ENCODE measurements at regions of chr1 and their contacts with region 1.

Region 1: GRCh38 chr1:201114236-201115131 is 2.3 kb upstream of the CACNA1S start:
- DNase-seq: peak; percentile 89
- H3K4me3 Mint-ChIP-seq: peak overlapping the region; percentile 81
- H3K27ac Mint-ChIP-seq: no peak overlapping the region
- H3K4me1 Mint-ChIP-seq: peaks cover 2% of the 10 kb centered on the region
- H3K27me3 Mint-ChIP-seq: peaks cover 2% of the 10 kb centered on the region

Region 2: GRCh38 chr1:200802865-200803512 is 311.5 kb before region 1 on chr1:
- CTCF ChIA-PET with region 1: no interaction called
- intact Hi-C with region 1: loop called (anchors 10 kb)
- DNase-seq: peak; percentile 90
- H3K4me3 Mint-ChIP-seq: no peak overlapping the region
- H3K27ac Mint-ChIP-seq: no peak overlapping the region
- H3K4me1 Mint-ChIP-seq: peaks cover 4% of the 10 kb centered on the region
- H3K27me3 Mint-ChIP-seq: no peaks in the 10 kb centered on the region

Region 3: GRCh38 chr1:200979574-200980451 is 134.7 kb before region 1 on chr1:
- CTCF ChIA-PET with region 1: interaction called, 32 read pairs
- intact Hi-C with region 1: loop called (anchors 1 kb)
- DNase-seq: peak; percentile 83
- H3K4me3 Mint-ChIP-seq: no peak overlapping the region
- H3K27ac Mint-ChIP-seq: no peak overlapping the region
- H3K4me1 Mint-ChIP-seq: no peaks in the 10 kb centered on the region
- H3K27me3 Mint-ChIP-seq: no peaks in the 10 kb centered on the region

Region 4: GRCh38 chr1:200992382-200993048 is 122.0 kb before region 1 on chr1:
- CTCF ChIA-PET with region 1: no interaction called
- intact Hi-C with region 1: no loop called
- DNase-seq: no peak
- H3K4me3 Mint-ChIP-seq: no peak overlapping the region
- H3K27ac Mint-ChIP-seq: no peak overlapping the region
- H3K4me1 Mint-ChIP-seq: no peaks in the 10 kb centered on the region
- H3K27me3 Mint-ChIP-seq: no peaks in the 10 kb centered on the region

Region 5: DNA sequence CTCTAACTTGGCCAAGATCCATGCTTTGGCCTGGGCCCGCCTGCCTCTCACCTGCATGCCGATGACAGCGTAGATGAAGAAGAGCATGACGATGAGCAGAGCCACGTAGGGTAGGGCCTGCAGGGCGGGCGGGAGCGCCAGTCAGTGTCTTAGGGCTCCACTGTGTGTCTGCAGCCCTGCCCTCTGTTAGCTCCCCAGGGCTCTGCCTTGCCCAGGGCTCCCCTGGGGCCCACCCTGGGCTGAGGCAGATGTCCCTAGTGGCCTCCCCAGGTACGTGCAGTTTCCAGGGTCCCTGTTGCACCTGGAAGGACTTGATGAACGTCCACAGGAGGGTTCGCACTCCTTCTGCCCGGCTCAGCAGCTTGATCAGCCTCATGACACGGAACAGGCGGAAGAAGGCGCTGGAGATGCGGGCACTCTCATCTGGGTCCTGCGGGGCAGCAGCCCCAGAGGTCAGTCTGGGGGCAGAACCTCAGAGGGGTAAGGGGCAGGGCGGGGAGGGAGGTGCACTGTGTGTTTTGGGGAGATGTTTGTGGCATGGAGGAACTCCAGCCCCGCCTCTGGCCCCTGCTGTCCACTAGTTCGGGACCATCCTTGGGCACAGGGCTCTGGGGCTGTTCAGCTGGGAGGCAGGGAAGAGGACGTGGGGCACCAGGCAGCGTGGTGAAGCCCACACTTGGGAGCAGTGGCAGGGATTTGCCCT is 61.2 kb before region 1 on chr1:
- CTCF ChIA-PET with region 1: no interaction called
- intact Hi-C with region 1: loop called (anchors 1 kb)
- DNase-seq: no peak
- H3K4me3 Mint-ChIP-seq: no peak overlapping the region
- H3K27ac Mint-ChIP-seq: no peak overlapping the region
- H3K4me1 Mint-ChIP-seq: peaks cover 13% of the 10 kb centered on the region
- H3K27me3 Mint-ChIP-seq: no peaks in the 10 kb centered on the region

Region 6: GRCh38 chr1:201064806-201065205 is 49.7 kb before region 1 on chr1:
- CTCF ChIA-PET with region 1: no interaction called
- intact Hi-C with region 1: no loop called
- DNase-seq: no peak
- H3K4me3 Mint-ChIP-seq: no peak overlapping the region
- H3K27ac Mint-ChIP-seq: no peak overlapping the region
- H3K4me1 Mint-ChIP-seq: no peaks in the 10 kb centered on the region
- H3K27me3 Mint-ChIP-seq: no peaks in the 10 kb centered on the region

Region 7: GRCh38 chr1:201085916-201086735 is 28.4 kb before region 1 on chr1:
- CTCF ChIA-PET with region 1: interaction called, 16 read pairs
- intact Hi-C with region 1: loop called (anchors 1 kb)
- DNase-seq: peak; percentile 66
- H3K4me3 Mint-ChIP-seq: no peak overlapping the region
- H3K27ac Mint-ChIP-seq: no peak overlapping the region
- H3K4me1 Mint-ChIP-seq: no peaks in the 10 kb centered on the region
- H3K27me3 Mint-ChIP-seq: peaks cover 2% of the 10 kb centered on the region

Region 8: GRCh38 chr1:201348211-201348566 is 233.7 kb after region 1 on chr1:
- CTCF ChIA-PET with region 1: no interaction called
- intact Hi-C with region 1: no loop called
- DNase-seq: peak; percentile 52
- H3K4me3 Mint-ChIP-seq: no peak overlapping the region
- H3K27ac Mint-ChIP-seq: no peak overlapping the region
- H3K4me1 Mint-ChIP-seq: no peaks in the 10 kb centered on the region
- H3K27me3 Mint-ChIP-seq: peaks cover 25% of the 10 kb centered on the region

Measured in activated naive CD4-positive, alpha-beta T cell treated with anti-CD3 and anti-CD28 coated beads for 36 hours (primary cell).